MCF 10A (cell line): ENCODE measurements at regions of chr7 and their contacts with region 1.

Region 1: DNA sequence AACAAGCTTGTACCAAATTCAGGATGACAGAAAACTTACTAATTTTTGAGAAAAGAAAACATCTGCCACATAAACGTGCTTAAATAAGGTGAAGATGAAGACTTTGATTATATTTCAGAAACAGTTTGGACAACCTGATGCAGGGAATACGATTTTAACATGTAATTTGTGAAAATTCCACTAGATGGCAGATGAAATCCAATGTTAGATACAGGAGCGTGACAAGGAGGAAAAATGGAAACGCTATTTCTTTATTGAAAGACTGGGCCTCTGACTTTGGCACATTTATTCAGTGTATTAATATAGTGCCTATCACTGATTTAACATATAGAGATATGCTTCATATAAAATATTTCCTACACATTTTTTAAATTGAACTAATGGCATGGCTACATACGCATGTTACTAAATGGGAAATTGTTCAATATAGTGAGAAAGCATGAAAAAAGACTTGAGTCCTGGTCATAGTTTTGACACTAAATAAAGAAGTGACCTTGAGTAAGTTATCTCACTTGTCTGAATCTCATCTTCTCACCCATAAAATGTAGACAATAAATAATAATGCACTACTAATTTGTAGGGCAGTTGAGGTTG is 60.7 kb downstream of the CD36 start:
- DNase-seq: peak; percentile 69
- H3K4me3 Mint-ChIP-seq: no peak overlapping the region
- H3K27ac Mint-ChIP-seq: peak overlapping the region; percentile 50
- H3K4me1 Mint-ChIP-seq: peaks cover 10% of the 10 kb centered on the region
- H3K27me3 Mint-ChIP-seq: no peaks in the 10 kb centered on the region
- CTCF ChIP-seq: peak; percentile 63

Region 2: GRCh38 chr7:80098795-80099194 is 600.3 kb before region 1 on chr7:
- CTCF ChIA-PET with region 1: no interaction called
- POLR2A ChIA-PET with region 1: no interaction called
- intact Hi-C with region 1: no loop called
- DNase-seq: no peak
- H3K4me3 Mint-ChIP-seq: no peak overlapping the region
- H3K27ac Mint-ChIP-seq: no peak overlapping the region
- H3K4me1 Mint-ChIP-seq: no peaks in the 10 kb centered on the region
- H3K27me3 Mint-ChIP-seq: no peaks in the 10 kb centered on the region
- CTCF ChIP-seq: peak; percentile 30

Region 3: DNA sequence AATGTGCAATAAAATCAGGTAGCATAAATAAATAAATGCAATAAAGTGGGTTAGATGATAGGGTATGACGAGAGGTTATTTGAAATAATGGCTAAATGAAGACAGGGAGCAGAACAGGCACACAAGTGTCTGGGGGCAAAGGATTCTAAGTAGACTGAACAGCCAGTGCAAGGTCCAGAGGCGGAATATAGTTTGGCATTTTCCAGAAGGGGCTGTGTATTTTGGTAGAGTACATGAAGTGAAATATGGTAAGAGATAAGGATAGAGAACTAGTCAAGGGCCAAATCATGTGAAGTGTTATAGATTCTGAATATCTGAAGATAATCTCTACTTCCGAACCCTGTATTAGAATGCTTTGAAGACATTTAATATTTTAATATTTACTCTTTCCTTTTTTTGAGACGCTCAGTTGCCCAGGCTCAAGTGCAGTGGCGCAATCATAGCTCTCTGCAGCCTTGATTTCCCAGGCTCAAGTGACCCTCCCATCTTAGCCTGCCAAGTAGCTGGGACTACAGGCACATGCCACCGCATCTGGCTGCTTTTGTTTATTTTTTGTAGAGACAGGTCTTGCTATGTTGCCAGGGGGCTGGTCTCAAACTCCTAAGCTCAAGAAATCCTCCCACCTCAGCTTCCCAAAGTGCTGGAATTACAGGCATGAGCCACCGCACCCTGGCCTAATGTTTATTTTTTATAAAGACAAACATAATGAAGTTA is 105.1 kb before region 1 on chr7:
- CTCF ChIA-PET with region 1: no interaction called
- POLR2A ChIA-PET with region 1: no interaction called
- intact Hi-C with region 1: no loop called
- DNase-seq: peak; percentile 54
- H3K4me3 Mint-ChIP-seq: no peak overlapping the region
- H3K27ac Mint-ChIP-seq: no peak overlapping the region
- H3K4me1 Mint-ChIP-seq: peaks cover 6% of the 10 kb centered on the region
- H3K27me3 Mint-ChIP-seq: no peaks in the 10 kb centered on the region
- CTCF ChIP-seq: no peak

Region 4: GRCh38 chr7:80732630-80733029 is 33.5 kb after region 1 on chr7:
- CTCF ChIA-PET with region 1: interaction called, 11 read pairs
- POLR2A ChIA-PET with region 1: no interaction called
- intact Hi-C with region 1: loop called (anchors 1 kb)
- DNase-seq: peak; percentile 43
- H3K4me3 Mint-ChIP-seq: no peak overlapping the region
- H3K27ac Mint-ChIP-seq: no peak overlapping the region
- H3K4me1 Mint-ChIP-seq: peaks cover 10% of the 10 kb centered on the region
- H3K27me3 Mint-ChIP-seq: no peaks in the 10 kb centered on the region
- CTCF ChIP-seq: peak; percentile 39

Region 5: GRCh38 chr7:81457852-81458522 is 758.8 kb after region 1 on chr7:
- CTCF ChIA-PET with region 1: interaction called, 32 read pairs
- POLR2A ChIA-PET with region 1: interaction called, 3 read pairs
- intact Hi-C with region 1: loop called (anchors 1 kb)
- DNase-seq: peak; percentile 37
- H3K4me3 Mint-ChIP-seq: no peak overlapping the region
- H3K27ac Mint-ChIP-seq: no peak overlapping the region
- H3K4me1 Mint-ChIP-seq: peaks cover 6% of the 10 kb centered on the region
- H3K27me3 Mint-ChIP-seq: no peaks in the 10 kb centered on the region
- CTCF ChIP-seq: peak; percentile 46

Region 6: DNA sequence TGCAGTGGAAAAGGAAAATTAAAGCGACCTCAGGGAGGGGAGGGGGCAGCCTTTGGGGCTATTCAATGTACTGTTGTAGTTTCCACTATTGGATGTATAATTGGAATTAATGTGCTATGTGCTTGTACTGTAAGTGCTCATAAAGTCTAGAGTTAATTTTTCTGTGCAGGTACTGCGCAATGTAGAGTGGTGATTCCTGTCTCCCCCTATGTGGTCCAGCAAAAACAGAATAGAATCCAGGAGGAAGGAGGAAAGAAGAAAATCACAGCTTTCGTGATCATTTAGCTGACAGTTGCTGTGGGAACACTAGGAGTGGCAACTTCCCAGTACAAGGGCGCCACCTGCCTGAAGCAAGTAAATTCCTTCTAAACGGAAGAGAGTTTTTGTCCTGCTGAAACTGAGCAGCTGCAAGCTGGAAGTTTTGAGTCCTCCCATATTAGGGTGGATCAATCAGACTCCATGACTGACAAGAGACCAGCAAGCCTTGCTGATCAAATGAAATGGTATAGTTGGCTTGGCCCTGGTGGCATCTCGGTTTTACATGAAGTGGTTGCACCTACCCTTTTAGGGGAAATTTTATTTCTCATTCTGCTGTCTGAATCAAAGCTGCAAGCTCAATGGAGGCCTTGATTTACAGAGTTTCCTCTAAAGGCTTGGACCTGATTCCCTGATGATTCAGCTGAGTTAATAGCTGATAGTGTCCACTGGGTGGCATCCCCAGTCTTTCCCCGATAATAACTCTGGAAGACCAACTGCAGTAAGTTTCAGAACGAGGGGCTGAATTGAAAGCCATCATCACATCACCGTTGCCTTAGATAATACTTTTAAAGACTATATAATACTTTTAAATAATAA is 771.0 kb after region 1 on chr7:
- CTCF ChIA-PET with region 1: interaction called, 25 read pairs
- POLR2A ChIA-PET with region 1: no interaction called
- intact Hi-C with region 1: loop called (anchors 1 kb)
- DNase-seq: peak; percentile 73
- H3K4me3 Mint-ChIP-seq: no peak overlapping the region
- H3K27ac Mint-ChIP-seq: no peak overlapping the region
- H3K4me1 Mint-ChIP-seq: peaks cover 7% of the 10 kb centered on the region
- H3K27me3 Mint-ChIP-seq: no peaks in the 10 kb centered on the region
- CTCF ChIP-seq: peak; percentile 65